PC-9 (cell line): ENCODE measurements at regions of chr16 and their contacts with region 1.

Region 1: GRCh38 chr16:30557957-30558788 is at the start of gene ZNF764:
- DNase-seq: peak; percentile 97 to 99
- H3K4me3 ChIP-seq: peak within 1 kb of the TSS; percentile 88
- H3K27ac ChIP-seq: peak within 1 kb of the TSS; percentile 64
- H3K4me1 ChIP-seq: peaks cover 19% of the 10 kb centered on the region
- H3K27me3 ChIP-seq: no peaks in the 10 kb centered on the region
- CTCF ChIP-seq: no peak
- total RNA-seq, gene ZNF764: 12.3 and 12.4 TPM in 2 replicates

Region 2: GRCh38 chr16:30499284-30499683 is 58.9 kb before region 1 on chr16:
- CTCF ChIA-PET with region 1: no interaction called
- POLR2A ChIA-PET with region 1: interaction called, 17 read pairs
- intact Hi-C with region 1: no loop called
- DNase-seq: no peak
- H3K4me3 ChIP-seq: no peak overlapping the region
- H3K27ac ChIP-seq: no peak overlapping the region
- H3K4me1 ChIP-seq: no peaks in the 10 kb centered on the region
- H3K27me3 ChIP-seq: peaks cover 6% of the 10 kb centered on the region; the same call in 1 of the 2 replicates
- CTCF ChIP-seq: no peak

Region 3: DNA sequence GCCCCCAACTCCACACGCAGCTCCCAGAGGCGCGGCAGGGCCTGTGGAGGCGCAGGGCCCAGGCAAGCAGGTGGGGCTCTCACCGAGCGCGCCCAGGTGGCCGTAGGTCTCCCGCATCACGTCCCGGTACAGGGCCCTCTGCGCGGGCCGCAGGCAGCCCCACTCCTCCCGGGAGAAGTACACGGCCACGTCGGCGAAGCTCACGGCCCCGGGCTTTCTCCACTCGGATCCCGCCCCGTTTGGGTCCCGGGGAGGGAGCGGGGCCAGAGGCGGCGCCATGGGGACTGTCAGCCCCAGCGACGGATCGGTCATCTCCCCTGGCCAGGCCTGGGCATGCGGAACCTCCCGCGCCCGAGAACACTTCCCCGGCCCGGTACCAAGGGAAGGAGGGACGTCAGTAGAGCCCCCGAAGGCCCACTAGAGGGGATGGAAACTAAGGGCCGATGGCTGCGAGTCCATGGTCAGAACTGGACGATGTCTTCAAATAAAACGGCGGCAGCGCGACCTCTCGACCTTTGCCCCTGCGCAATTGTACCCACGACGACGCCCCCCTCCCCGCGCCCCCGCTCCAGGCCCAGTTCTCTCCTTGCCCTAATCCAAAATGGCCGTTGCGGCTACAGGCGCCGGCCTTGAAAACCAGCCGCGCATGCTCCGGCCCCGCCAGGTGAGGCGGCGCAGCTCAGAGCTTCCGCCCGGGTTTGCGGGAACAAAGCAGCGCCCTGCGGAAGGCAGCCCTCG is 23.6 kb before region 1 on chr16 and contains the start of gene ZNF747:
- CTCF ChIA-PET with region 1: interaction called, 25 read pairs
- POLR2A ChIA-PET with region 1: interaction called, 21 read pairs
- intact Hi-C with region 1: loop called (anchors 1 kb)
- DNase-seq: peak; percentile 72 to 92
- H3K4me3 ChIP-seq: peak within 1 kb of the TSS; percentile 73
- H3K27ac ChIP-seq: peak within 1 kb of the TSS; percentile 57
- H3K4me1 ChIP-seq: peaks cover 30% of the 10 kb centered on the region
- H3K27me3 ChIP-seq: no peaks in the 10 kb centered on the region
- CTCF ChIP-seq: peak; percentile 29; the same call in 1 of the 2 replicates
- total RNA-seq, gene ZNF747: 14.5 and 17.9 TPM in 2 replicates

Region 4: GRCh38 chr16:30585400-30586189 is 27.4 kb after region 1 on chr16 and contains the start of gene ZNF785:
- CTCF ChIA-PET with region 1: interaction called, 3 read pairs
- POLR2A ChIA-PET with region 1: interaction called, 7 read pairs
- intact Hi-C with region 1: loop called (anchors 1 kb)
- DNase-seq: peak; percentile 97 to 98
- H3K4me3 ChIP-seq: peak within 1 kb of the TSS; percentile 89
- H3K27ac ChIP-seq: peak within 1 kb of the TSS; percentile 57
- H3K4me1 ChIP-seq: peaks cover 12% of the 10 kb centered on the region; the same call in 1 of the 2 replicates
- H3K27me3 ChIP-seq: no peaks in the 10 kb centered on the region
- CTCF ChIP-seq: peak; percentile 46
- total RNA-seq, gene ZNF785: 30.9 and 39.8 TPM in 2 replicates

Region 5: DNA sequence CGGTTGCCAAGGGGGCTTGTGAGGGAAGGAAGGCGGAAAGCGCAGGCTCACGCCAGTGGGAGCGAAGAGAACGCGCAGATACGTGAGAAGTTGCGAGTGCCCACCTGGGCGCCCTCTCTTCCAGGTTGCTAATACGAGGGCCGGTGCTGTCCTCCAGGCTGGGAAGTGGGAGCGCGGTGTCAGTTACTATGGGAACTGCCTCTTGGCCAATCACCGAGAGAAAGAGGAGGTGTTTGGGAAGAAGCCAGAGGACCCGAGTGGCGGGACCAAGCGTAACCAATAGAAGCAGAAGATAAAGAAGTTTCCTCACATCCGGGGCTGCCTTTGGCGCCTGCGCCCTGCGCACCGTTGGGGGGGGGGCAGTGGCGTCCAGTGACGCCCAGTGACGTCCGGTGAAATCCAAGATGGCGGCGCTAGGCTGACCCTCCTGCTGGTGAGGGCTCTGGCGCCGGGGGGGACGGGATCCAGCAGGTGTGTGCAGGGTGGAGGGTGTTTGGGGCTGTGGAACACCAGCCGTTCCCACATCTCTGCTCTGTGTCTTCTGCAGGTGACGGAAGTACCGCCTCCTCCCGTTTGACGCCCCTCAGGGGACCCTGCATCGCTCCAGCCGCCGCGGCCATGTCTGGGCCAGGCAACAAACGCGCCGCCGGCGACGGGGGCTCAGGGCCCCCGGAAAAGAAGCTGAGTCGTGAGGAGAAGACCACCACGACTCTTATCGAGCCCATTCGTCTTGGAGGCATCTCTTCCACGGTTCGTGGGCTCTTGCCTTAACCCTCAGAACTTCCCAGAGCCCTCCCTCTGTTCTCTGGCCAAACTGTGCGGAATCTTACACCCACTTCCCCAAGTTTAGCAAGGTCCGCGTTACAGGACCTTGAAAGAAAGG is 204.0 kb after region 1 on chr16 and contains the starts of genes CFAP119 and RNF40:
- CTCF ChIA-PET with region 1: no interaction called
- POLR2A ChIA-PET with region 1: no interaction called
- intact Hi-C with region 1: loop called (anchors 10 kb)
- DNase-seq: peak; percentile 96 to 99
- H3K4me3 ChIP-seq: peak within 1 kb of the TSS; percentile 83
- H3K27ac ChIP-seq: peak within 1 kb of the TSS; percentile 2; the same call in 1 of the 2 replicates
- H3K4me1 ChIP-seq: peaks cover 24% of the 10 kb centered on the region
- H3K27me3 ChIP-seq: no peaks in the 10 kb centered on the region
- CTCF ChIP-seq: no peak
- total RNA-seq, gene CFAP119: 17.9 and 19.9 TPM in 2 replicates
- total RNA-seq, gene RNF40: 149 and 178 TPM in 2 replicates